PC-3 (cell line): ENCODE measurements at regions of chr19 and their contacts with region 1.

Region 1: DNA sequence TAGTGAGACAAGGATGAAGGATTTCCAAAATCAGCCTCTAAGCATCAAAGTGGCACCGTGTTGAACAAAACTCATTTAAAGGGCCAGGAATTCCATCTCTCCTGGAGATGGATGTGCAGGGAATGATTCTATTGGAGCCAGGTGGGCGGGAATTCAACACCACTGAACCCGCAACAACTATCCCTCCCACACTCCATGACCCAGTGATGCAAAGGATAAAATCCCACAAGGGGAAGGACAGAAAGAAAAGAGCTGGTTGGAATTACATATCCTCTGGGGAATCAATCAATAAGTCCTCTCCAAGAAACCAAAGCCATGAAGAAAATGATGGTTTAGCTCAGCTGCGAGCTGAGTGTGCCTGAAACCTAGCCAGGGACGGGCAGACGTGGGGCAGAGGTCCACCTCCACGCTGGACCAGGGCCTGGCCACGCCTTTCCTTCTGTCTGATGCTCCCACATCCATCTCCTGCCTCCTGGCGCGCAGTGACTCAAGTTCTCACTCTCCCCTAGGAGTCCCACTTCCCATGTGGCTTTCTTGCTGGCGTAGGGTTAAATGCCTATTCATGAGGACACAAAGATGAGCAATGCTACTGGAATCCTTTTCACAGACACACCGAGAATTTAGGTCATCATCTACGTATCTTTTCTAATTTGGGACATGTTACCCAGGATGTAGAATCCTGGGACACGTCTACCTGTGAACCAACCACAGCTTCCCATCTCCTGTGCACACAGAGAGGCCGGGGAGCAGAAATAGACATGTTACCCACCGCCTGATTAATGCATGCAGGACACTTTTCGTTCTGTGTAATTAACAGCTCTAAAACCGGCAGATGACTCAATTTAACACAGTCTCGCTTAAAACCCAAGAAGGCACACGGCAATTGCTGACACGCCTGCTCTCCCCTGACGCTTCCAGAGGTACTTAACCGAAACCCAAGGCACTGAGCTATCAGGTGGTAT is 48.6 kb downstream of the PEPD start:
- DNase-seq: peak; percentile 85
- ATAC-seq: peak; percentile 88
- H3K4me3 ChIP-seq: peak overlapping the region; percentile 28; the same call in 1 of the 2 replicates
- H3K27ac ChIP-seq: peak overlapping the region; percentile 95
- H3K4me1 ChIP-seq: peaks cover 24% of the 10 kb centered on the region
- H3K27me3 ChIP-seq: no peaks in the 10 kb centered on the region
- CTCF ChIP-seq: 0 out of 2 replicates have a peak, but pooled peaks have one; percentile 11

Region 2: DNA sequence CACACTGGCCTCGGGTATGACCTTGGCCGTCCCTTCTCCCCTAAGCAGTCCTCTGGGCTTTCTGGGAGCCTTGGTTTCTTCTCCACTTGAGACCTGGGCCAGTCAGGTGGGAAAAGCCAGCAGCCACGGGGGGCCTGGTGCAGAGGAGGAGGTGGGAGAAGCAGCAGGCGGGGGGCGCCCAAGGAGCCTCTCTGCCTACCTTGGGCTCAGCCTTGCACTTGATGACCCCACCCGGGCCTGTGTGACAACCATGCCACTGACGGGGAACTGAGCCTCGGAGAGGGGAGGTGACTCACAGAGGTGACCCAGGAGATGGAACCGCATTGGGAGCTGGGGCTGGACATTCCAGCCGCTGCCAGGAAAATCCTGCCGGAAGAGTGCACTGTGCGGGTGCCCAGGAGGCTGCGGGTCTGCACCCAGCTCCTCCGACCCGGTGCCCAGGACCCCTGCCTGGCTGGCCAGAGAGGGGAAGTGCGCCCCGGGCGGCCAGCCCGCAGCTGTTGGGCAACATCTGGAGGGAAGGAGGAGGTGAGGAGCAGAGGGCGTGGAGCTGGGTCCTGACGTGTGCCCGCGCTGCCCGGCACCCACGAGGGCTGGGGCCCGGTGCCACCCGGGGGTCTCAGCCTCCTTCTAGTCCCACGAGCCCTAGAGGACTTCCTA is 223.9 kb before region 1 on chr19:
- CTCF ChIA-PET with region 1: no interaction called
- POLR2A ChIA-PET with region 1: no interaction called
- intact Hi-C with region 1: no loop called
- DNase-seq: peak; percentile 39
- ATAC-seq: peak; percentile 60
- H3K4me3 ChIP-seq: no peak overlapping the region
- H3K27ac ChIP-seq: no peak overlapping the region
- H3K4me1 ChIP-seq: no peaks in the 10 kb centered on the region
- H3K27me3 ChIP-seq: no peaks in the 10 kb centered on the region
- CTCF ChIP-seq: no peak

Region 3: GRCh38 chr19:33394006-33394849 is 78.7 kb before region 1 on chr19:
- CTCF ChIA-PET with region 1: no interaction called
- POLR2A ChIA-PET with region 1: no interaction called
- intact Hi-C with region 1: no loop called
- DNase-seq: peak; percentile 14
- ATAC-seq: peak; percentile 39; the same call in 1 of the 2 replicates
- H3K4me3 ChIP-seq: no peak overlapping the region
- H3K27ac ChIP-seq: no peak overlapping the region
- H3K4me1 ChIP-seq: no peaks in the 10 kb centered on the region
- H3K27me3 ChIP-seq: no peaks in the 10 kb centered on the region
- CTCF ChIP-seq: no peak

Region 4: DNA sequence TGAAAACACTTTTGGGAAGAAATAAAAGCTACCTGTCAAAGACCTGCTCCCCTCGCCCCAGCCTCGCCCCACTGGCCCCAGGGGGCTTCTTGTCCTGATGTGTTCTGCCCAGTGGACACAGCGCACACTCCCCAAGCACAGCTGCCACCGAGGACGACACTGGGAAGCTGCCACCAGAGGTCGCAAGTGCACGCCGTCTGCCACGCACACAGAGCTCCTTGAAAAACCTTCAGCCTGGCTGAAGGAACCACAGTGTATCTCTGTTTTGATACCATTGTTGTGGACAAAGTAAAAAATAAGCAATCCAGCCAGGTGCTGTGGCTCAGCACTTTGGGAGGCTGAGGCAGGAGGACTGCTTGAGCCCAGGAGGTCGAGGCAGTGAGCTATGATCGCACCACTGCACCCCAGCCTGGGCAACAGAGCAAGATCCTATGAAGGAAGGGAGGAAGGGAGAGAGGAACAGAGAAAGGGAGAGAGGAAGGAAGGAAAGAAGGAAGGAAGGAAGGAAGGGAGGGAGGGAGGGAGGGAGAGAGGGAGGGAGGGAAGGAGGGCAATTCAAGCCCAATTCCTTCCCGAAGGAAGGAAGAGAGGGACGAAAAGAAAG is 42.2 kb before region 1 on chr19:
- CTCF ChIA-PET with region 1: no interaction called
- POLR2A ChIA-PET with region 1: no interaction called
- intact Hi-C with region 1: loop called (anchors 2 kb)
- DNase-seq: peak; percentile 71
- ATAC-seq: peak; percentile 97
- H3K4me3 ChIP-seq: no peak overlapping the region
- H3K27ac ChIP-seq: no peak overlapping the region
- H3K4me1 ChIP-seq: no peaks in the 10 kb centered on the region
- H3K27me3 ChIP-seq: no peaks in the 10 kb centered on the region
- CTCF ChIP-seq: peak; percentile 74